ENCODE measurements at regions of chr3 and their contacts with region 1.

Region 1: DNA sequence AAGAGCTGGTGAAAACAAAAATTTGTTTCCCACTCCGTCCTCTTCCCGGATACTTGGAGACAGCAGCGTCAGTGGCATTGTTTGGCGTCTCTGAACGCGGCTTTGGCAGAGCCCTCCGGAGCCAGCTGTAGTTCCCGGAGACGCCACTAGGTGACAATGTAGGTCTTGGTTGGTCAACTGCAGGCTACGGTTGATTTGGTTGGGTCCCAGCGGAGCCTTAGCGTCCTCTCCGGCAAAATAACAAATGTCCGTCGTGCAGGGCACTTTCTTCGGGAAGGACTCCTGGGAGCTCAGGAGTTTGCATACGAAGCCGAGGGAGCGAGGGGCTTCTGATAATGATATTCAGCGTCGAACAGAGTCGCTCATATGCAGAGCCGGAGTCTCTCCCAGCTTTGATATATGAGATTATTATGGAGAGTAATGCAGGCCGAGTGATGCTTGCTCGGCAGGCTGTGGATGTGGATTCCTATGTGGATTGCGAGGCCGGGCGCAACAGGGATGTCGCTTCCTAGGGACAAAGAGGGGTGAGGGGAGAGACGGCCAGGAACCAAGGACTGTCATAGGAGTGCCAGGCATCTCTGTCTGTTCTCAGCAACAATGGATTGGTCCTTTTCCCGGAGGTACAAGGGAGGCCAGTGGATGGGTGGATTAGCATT is 74.8 kb downstream of the IL20RB start:
- DNase-seq: peak; percentile 76
- ATAC-seq: peak; percentile 98
- H3K4me3 ChIP-seq: peak overlapping the region; percentile 41
- H3K27ac ChIP-seq: no peak overlapping the region
- H3K4me1 ChIP-seq: no peaks in the 10 kb centered on the region
- H3K27me3 ChIP-seq: peaks cover 2% of the 10 kb centered on the region
- CTCF ChIP-seq: peak; percentile 83
- POLR2A ChIP-seq: no peak
- RAD21 ChIP-seq: peak; percentile 73

Region 2: DNA sequence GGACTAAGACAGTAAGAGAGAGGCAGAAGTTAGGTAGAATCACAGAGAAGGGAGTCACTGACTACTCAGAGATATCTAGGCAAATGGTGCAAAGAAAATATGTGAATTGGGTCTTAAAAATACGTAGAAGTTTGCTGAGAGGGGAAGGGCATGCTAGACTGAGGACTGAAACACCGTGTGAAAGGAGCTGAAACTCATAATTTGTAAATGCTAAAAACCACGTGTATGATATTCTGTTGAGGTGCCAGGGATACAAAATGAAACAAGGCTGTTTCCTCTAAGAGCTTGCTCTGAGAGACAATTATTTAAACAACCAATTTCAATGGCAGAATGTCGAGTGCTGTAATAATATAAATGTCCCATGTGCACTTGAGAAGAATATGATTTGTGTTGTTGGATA is 123.4 kb before region 1 on chr3:
- CTCF ChIA-PET with region 1: no interaction called
- POLR2A ChIA-PET with region 1: no interaction called
- dilution Hi-C with region 1: no loop called
- in situ Hi-C with region 1: no loop called
- intact Hi-C with region 1: no loop called
- DNase-seq: no peak
- ATAC-seq: no peak
- H3K4me3 ChIP-seq: no peak overlapping the region
- H3K27ac ChIP-seq: no peak overlapping the region
- H3K4me1 ChIP-seq: no peaks in the 10 kb centered on the region
- H3K27me3 ChIP-seq: no peaks in the 10 kb centered on the region
- CTCF ChIP-seq: no peak
- POLR2A ChIP-seq: no peak
- RAD21 ChIP-seq: no peak

Region 3: DNA sequence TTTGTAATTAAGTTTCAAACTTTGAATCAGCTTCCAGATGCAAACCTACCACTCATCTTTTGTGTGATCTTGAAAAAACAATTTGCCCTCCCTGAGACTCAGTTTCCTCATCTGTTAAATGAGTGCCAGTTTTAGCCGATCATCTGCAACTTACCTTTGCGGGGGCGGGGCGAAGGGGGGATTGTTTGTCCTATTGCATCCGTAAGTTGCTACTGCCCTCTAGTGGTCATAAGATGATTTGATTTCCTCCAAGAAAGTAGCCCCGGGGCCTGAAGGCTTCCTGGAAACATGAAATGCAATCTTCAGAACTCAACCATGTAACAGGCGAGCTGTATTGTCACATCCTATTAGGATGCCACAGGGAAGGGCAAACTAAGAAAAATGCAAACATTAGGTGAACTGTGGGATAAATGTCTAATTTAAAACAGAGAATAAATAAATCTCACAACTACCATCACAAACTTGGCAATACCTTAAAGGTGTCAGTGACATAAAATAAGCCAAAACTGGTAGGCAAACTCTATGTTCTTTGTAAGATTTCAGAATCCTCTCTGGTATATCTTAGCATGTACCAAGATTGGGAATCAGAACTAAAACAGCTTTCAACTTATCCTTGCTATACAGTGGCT is 913.9 kb after region 1 on chr3:
- CTCF ChIA-PET with region 1: no interaction called
- POLR2A ChIA-PET with region 1: no interaction called
- dilution Hi-C with region 1: no loop called
- in situ Hi-C with region 1: no loop called
- intact Hi-C with region 1: loop called (anchors 1 kb)
- DNase-seq: peak; percentile 71
- ATAC-seq: peak; percentile 63; the same call in 1 of the 2 replicates
- H3K4me3 ChIP-seq: no peak overlapping the region
- H3K27ac ChIP-seq: no peak overlapping the region
- H3K4me1 ChIP-seq: no peaks in the 10 kb centered on the region
- H3K27me3 ChIP-seq: no peaks in the 10 kb centered on the region; the same call in none of the 2 replicates
- CTCF ChIP-seq: peak; percentile 70
- POLR2A ChIP-seq: no peak
- RAD21 ChIP-seq: peak; percentile 71

Region 4: GRCh38 chr3:137970914-137971831 is 938.6 kb after region 1 on chr3:
- CTCF ChIA-PET with region 1: interaction called, 5 read pairs
- POLR2A ChIA-PET with region 1: no interaction called
- dilution Hi-C with region 1: no loop called
- in situ Hi-C with region 1: no loop called
- intact Hi-C with region 1: loop called (anchors 1 kb)
- DNase-seq: peak; percentile 50
- ATAC-seq: peak; percentile 99
- H3K4me3 ChIP-seq: no peak overlapping the region
- H3K27ac ChIP-seq: no peak overlapping the region
- H3K4me1 ChIP-seq: no peaks in the 10 kb centered on the region
- H3K27me3 ChIP-seq: peaks cover 1% of the 10 kb centered on the region
- CTCF ChIP-seq: peak; percentile 81
- POLR2A ChIP-seq: no peak
- RAD21 ChIP-seq: peak; percentile 72